B cell (primary cell): ENCODE measurements at regions of chr17 and their contacts with region 1.

Region 1: GRCh38 chr17:76027159-76027839 is at the start of gene EVPL:
- DNase-seq: no peak
- ATAC-seq: no peak
- H3K4me3 ChIP-seq: no peak within 1 kb of the TSS
- H3K4me3 Mint-ChIP-seq: no peak within 1 kb of the TSS
- H3K27ac ChIP-seq: no peak within 1 kb of the TSS
- H3K27ac Mint-ChIP-seq: no peak within 1 kb of the TSS
- H3K4me1 ChIP-seq: peaks cover 8 to 9% of the 10 kb centered on the region in 2 donors
- H3K4me1 Mint-ChIP-seq: peaks cover 8% of the 10 kb centered on the region
- H3K27me3 ChIP-seq: peaks cover 0 to 2% (median 0%) of the 10 kb centered on the region in 4 experiments
- H3K27me3 Mint-ChIP-seq: no peaks in the 10 kb centered on the region
- CTCF ChIP-seq: no peak
- total RNA-seq, gene EVPL: not detected in 2 replicates

Region 2: GRCh38 chr17:76946111-76946763 is 918.9 kb after region 1 on chr17:
- CTCF ChIA-PET with region 1: no interaction called
- POLR2A ChIA-PET with region 1: interaction called, 11 read pairs
- intact Hi-C with region 1: no loop called
- DNase-seq: no peak
- ATAC-seq: no peak
- H3K4me3 ChIP-seq: no peak overlapping the region
- H3K4me3 Mint-ChIP-seq: no peak overlapping the region
- H3K27ac ChIP-seq: no peak overlapping the region
- H3K27ac Mint-ChIP-seq: no peak overlapping the region
- H3K4me1 ChIP-seq: no peaks in the 10 kb centered on the region
- H3K4me1 Mint-ChIP-seq: no peaks in the 10 kb centered on the region
- H3K27me3 ChIP-seq: peaks cover 0 to 4% (median 0%) of the 10 kb centered on the region in 4 experiments
- H3K27me3 Mint-ChIP-seq: peaks cover 6% of the 10 kb centered on the region
- CTCF ChIP-seq: no peak